ENCODE measurements at regions of chr16 and their contacts with region 1.

Region 1: DNA sequence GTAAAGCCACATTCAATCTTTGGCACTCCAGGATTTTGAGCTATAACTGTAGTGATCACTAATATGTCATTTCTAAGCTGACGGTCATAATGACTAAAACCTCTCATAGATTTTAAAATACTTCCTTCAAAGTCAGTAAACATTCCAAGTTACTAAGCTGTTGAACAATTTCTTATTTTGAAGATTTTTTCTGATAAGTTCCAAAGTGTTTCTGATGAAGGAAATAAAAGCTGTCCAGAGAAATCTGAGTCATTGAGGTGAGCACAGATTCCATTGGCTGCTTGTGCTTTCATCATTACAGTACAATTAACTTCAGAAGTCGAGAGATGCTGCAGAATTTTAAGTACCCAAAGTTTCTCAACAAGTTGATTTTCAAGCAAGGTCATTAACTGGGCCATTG is 23.9 kb downstream of the NLRC5 start:
- DNase-seq: no peak
- ATAC-seq: no peak
- H3K4me3 Mint-ChIP-seq: peak overlapping the region; percentile 19
- H3K27ac Mint-ChIP-seq: peak overlapping the region; percentile 95
- H3K4me1 Mint-ChIP-seq: peaks cover 85% of the 10 kb centered on the region
- H3K27me3 Mint-ChIP-seq: no peaks in the 10 kb centered on the region

Region 2: GRCh38 chr16:56742030-56742984 is 270.9 kb before region 1 on chr16:
- CTCF ChIA-PET with region 1: no interaction called
- POLR2A ChIA-PET with region 1: no interaction called
- intact Hi-C with region 1: no loop called
- DNase-seq: no peak
- ATAC-seq: peak; percentile 73
- H3K4me3 Mint-ChIP-seq: no peak overlapping the region
- H3K27ac Mint-ChIP-seq: no peak overlapping the region
- H3K4me1 Mint-ChIP-seq: peaks cover 37% of the 10 kb centered on the region
- H3K27me3 Mint-ChIP-seq: no peaks in the 10 kb centered on the region

Region 3: DNA sequence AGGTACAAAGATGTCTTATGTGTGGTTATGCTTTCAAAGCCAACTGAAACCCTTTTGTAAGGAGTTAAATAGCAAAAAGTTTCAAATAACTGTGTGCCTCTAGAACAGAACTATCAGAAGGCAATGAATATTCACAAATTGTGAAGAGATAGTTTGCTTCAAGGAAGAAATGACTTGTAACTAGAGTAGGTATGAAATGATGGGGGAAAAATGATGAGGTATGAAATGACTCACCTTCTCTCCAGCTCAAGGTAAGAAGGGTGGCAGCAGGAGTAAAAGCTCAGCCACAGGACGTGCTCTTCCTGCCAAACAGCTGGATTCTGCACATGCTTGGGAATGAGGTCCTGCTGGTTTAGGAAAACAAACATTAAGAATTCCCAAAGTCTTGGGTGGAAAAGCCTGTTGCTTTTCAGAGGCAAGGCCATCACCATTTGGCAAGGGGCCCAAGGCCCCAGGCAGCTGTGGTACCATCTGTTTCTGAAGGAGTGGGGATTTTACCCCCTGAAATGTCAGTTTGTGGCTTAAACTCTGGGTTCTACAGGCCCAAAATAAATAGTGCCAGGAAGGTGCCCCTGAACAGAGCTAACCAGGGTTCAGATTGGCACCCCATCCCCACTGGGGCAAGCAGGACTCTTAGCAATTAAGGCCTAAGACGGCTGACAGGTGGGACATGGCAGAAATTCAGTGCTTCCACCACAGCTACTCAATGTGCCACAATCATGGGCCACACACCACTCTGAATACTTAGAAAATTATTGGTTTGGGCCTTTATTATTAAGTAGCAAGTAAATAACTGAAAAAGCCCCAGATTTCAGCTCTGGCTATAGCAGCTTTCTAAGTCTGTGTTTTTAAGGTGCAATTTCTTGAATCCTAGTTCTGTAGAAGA is 68.0 kb before region 1 on chr16:
- CTCF ChIA-PET with region 1: no interaction called
- POLR2A ChIA-PET with region 1: no interaction called
- intact Hi-C with region 1: loop called in 1 of 2 experiments (anchors 2 kb)
- DNase-seq: peak; percentile 61
- ATAC-seq: peak; percentile 79
- H3K4me3 Mint-ChIP-seq: peak overlapping the region; percentile 51
- H3K27ac Mint-ChIP-seq: peak overlapping the region; percentile 91
- H3K4me1 Mint-ChIP-seq: peaks cover 63% of the 10 kb centered on the region
- H3K27me3 Mint-ChIP-seq: no peaks in the 10 kb centered on the region

Region 4: DNA sequence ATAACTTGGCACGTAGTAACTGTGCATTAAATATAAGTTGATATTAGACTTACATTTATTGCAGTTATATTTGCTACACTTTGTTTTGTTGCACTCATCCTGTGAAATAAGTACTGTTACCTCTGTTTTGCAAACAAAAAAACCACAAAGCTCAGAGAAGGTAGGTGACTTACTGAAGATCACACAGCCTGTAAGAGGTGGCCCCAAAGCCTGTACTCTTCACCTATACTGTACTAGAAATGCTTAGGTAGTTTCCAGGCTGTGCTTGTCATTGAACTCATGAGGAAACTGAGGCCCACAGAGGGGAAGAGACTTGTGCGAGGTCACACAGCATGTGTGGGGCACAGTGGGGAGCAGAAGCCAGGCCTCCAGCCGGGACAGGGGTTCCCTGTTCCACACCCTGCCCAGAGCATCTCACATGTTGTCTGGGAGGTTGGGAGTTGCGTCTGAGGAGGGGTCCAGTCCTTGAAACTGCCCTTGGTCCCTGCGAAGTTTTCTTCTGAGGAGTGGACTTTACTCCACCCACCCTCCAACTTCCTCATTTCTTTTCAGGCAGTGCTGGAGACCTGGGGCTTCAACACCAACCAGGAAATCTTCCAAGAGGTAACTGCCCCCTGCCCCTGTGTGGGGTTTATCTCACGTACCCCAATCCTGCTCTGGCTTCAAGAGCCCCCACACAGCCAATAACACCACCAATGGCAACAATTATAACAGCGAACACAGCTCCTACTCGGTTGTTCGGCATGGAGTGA is 38.5 kb before region 1 on chr16:
- CTCF ChIA-PET with region 1: no interaction called
- POLR2A ChIA-PET with region 1: no interaction called
- intact Hi-C with region 1: no loop called
- DNase-seq: no peak
- ATAC-seq: no peak
- H3K4me3 Mint-ChIP-seq: no peak overlapping the region
- H3K27ac Mint-ChIP-seq: peak overlapping the region; percentile 19
- H3K4me1 Mint-ChIP-seq: peaks cover 23% of the 10 kb centered on the region
- H3K27me3 Mint-ChIP-seq: no peaks in the 10 kb centered on the region

Region 5: GRCh38 chr16:56988948-56989945 is 24.0 kb before region 1 on chr16 and contains the start of gene NLRC5:
- CTCF ChIA-PET with region 1: interaction called, 6 read pairs
- POLR2A ChIA-PET with region 1: interaction called, 3 read pairs
- intact Hi-C with region 1: loop called (anchors 1 kb)
- DNase-seq: peak; percentile 97
- ATAC-seq: peak; percentile 78
- H3K4me3 Mint-ChIP-seq: peak within 1 kb of the TSS; percentile 98
- H3K27ac Mint-ChIP-seq: peak within 1 kb of the TSS; percentile 99
- H3K4me1 Mint-ChIP-seq: peaks cover 69% of the 10 kb centered on the region
- H3K27me3 Mint-ChIP-seq: no peaks in the 10 kb centered on the region
- total RNA-seq, gene NLRC5: 143 to 175 TPM

Region 6: DNA sequence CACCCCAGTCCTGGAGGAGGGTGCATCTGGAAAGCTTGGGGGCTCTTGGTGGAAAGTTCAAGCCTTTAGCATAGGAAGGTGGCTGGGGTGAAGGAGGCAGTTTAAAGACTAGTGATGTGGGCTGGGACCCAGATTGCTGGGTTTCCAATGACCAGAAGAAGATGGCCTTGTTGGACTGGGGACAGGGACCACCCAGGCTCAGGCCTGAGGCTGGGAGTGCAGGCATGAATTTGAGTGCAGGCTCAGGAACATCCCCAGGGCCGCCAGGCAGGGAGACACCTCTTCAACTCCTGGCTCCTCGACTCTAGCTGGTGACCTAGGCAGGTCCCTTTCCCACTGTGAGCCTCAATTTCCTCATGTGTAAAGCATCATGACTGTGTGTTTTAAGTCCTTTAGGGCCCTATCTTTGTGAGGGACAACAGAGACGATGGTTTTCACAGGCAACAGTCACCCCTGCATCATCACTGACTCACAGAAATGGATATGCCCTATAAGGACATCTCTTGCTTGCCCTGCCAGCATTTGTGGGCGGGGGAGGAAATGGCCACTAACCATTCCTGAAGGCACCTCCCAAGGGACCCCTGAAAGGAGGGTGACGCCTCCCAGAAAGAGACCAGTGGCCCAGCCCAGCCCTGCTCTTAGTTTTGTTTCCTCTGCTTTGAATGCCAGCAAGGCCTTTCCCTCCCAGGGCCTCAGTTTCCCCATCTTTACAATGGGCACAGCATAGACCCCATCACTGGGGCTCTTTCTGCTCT is 12.8 kb before region 1 on chr16:
- CTCF ChIA-PET with region 1: interaction called, 4 read pairs
- POLR2A ChIA-PET with region 1: interaction called, 6 read pairs
- intact Hi-C with region 1: loop called (anchors 1 kb)
- DNase-seq: peak; percentile 82
- ATAC-seq: peak; percentile 89
- H3K4me3 Mint-ChIP-seq: peak overlapping the region; percentile 59
- H3K27ac Mint-ChIP-seq: peak overlapping the region; percentile 98
- H3K4me1 Mint-ChIP-seq: peaks cover 92% of the 10 kb centered on the region
- H3K27me3 Mint-ChIP-seq: no peaks in the 10 kb centered on the region

Region 7: GRCh38 chr16:57039148-57039812 is 26.1 kb after region 1 on chr16:
- CTCF ChIA-PET with region 1: interaction called, 5 read pairs
- POLR2A ChIA-PET with region 1: interaction called, 7 read pairs
- intact Hi-C with region 1: loop called (anchors 1 kb)
- DNase-seq: peak; percentile 60
- ATAC-seq: peak; percentile 9
- H3K4me3 Mint-ChIP-seq: peak overlapping the region; percentile 2
- H3K27ac Mint-ChIP-seq: peak overlapping the region; percentile 97
- H3K4me1 Mint-ChIP-seq: peaks cover 89% of the 10 kb centered on the region
- H3K27me3 Mint-ChIP-seq: no peaks in the 10 kb centered on the region

Region 8: DNA sequence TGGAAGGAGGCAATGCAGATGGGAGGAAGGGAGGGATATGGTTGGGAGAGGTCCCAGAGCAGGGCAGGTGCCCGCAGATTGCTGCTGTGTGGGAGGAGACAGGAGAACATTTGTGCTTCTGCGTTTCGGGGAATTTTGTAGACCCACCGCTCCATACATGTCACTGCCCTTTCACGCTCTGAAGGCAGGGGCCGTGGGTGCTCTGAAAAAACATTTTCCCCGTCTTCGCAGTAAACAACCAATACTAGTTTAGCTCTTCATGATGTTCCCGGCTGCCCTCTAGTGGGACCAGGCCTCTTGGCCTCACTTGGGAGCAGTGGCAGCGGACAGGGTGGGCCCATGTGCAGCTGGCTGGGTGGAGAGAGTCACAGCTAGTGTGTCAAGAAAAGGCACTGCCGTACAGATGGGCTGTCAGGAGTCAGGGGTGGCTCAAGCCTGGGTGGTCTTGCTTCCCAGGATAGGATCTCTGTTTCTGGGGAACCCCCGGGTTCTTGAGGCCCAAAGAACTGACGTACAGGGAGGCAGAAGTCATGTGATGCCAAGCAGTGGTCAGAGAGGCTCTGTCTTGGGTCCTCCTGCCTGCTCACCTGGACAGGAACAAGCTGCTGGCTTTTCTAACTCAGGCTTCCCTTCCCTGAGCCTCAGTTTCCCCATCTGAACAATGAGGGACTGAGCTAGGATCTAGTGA is 32.6 kb after region 1 on chr16:
- CTCF ChIA-PET with region 1: interaction called, 5 read pairs
- POLR2A ChIA-PET with region 1: interaction called, 7 read pairs
- intact Hi-C with region 1: loop called (anchors 1 kb)
- DNase-seq: peak; percentile 62
- ATAC-seq: no peak
- H3K4me3 Mint-ChIP-seq: no peak overlapping the region
- H3K27ac Mint-ChIP-seq: peak overlapping the region; percentile 73
- H3K4me1 Mint-ChIP-seq: peaks cover 48% of the 10 kb centered on the region
- H3K27me3 Mint-ChIP-seq: no peaks in the 10 kb centered on the region

Measured in activated CD4-positive, alpha-beta T cell treated with anti-CD3 and anti-CD28 coated beads for 36 hours (primary cell).